ENCODE measurements at regions of chr9 and their contacts with region 1.

Region 1: DNA sequence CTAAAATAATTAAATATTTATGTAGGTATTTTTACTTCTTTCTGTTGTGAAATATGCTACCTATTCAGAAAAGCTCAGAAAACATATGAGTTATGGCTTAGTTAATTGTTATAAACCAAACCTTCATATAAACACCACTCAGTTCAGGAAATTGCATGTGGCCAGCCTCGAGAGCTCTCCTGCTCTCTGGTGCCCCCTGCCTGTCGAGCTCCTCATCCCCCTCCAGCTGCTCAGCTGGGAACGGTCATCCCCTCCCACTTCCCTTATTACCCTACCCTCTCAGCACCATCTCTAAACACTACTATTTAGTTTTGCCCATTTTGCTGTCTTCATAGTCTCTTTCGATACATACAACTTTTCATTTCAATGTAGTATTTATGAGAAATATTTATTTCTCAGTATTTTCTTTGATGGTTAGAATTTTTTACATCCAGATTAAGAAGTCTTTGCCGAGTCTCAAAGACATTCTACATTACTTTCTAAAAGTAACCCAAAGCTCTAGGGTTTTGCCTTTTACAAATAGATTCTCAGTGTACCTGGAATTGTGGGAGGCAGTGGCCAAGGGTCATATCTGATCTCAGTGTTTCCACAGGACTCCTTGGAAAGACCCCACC is 51.2 kb upstream of the SEMA4D start:
- DNase-seq: peak; percentile 89
- ATAC-seq: peak; percentile 100
- H3K4me3 ChIP-seq: no peak overlapping the region
- H3K4me3 Mint-ChIP-seq: no peak overlapping the region
- H3K27ac ChIP-seq: no peak overlapping the region
- H3K27ac Mint-ChIP-seq: peak overlapping the region; percentile 37
- H3K4me1 ChIP-seq: peaks cover 0 to 4% of the 10 kb centered on the region in 2 donors
- H3K4me1 Mint-ChIP-seq: peaks cover 6% of the 10 kb centered on the region
- H3K27me3 ChIP-seq: no peaks in the 10 kb centered on the region
- H3K27me3 Mint-ChIP-seq: no peaks in the 10 kb centered on the region
- CTCF ChIP-seq: peak; percentile 98

Region 2: DNA sequence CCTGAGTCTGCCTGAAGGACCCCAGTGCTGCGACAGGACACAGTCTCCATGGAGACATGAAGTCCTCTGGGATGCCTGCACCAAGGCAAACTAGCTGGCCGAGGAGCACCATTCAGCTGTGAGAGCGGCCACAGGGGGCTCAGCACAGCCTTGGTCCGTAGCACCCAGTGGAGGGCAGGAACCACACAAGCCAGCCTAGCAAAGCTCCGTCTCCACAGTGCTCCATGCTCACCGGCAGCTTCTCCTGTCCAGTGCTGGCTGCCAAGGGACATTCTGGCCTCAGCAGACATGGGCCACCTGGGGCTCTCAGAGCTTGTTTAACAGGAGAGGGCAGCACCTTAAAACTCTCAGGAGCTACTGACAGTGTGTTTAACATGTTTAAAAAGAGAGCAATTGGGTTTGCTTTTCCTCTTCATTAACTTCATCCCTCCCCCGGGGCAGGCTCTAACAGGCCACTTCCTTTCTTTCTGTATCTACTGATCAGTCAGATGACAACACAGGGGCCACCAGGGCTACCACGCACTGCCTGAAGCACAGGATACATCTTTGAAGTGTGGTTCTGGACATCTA is 173.9 kb before region 1 on chr9:
- CTCF ChIA-PET with region 1: interaction called, 83 read pairs
- POLR2A ChIA-PET with region 1: interaction called, 5 read pairs
- intact Hi-C with region 1: loop called (anchors 1 kb)
- DNase-seq: peak; percentile 57
- ATAC-seq: peak; percentile 80
- H3K4me3 ChIP-seq: no peak overlapping the region
- H3K4me3 Mint-ChIP-seq: peak overlapping the region; percentile 27
- H3K27ac ChIP-seq: peak overlapping the region; percentile 48 to 65
- H3K27ac Mint-ChIP-seq: peak overlapping the region; percentile 90
- H3K4me1 ChIP-seq: peaks cover 11 to 22% of the 10 kb centered on the region in 2 donors
- H3K4me1 Mint-ChIP-seq: peaks cover 31% of the 10 kb centered on the region
- H3K27me3 ChIP-seq: no peaks in the 10 kb centered on the region
- H3K27me3 Mint-ChIP-seq: no peaks in the 10 kb centered on the region
- CTCF ChIP-seq: peak; percentile 10

Region 3: DNA sequence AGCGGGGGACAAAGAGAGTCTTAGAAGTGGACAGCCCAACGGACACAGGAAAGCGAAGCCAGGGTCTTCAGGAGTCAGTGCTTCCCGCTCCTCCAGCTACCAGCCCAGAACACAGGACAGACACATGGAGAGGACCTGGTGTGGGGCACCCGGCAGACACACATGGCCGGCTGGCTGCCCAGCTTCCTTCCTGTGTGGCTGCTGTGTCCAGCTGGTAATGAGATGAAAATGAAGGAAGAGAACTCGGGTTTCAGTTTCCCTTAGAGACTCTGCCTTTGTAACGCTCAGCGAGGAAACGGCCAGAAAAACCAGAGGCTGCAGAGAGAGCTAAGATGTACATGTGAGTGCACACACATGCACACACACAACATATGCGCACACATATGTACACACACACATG is 143.3 kb before region 1 on chr9:
- CTCF ChIA-PET with region 1: interaction called, 72 read pairs
- POLR2A ChIA-PET with region 1: interaction called, 3 read pairs
- intact Hi-C with region 1: no loop called
- DNase-seq: peak; percentile 63
- ATAC-seq: peak; percentile 35
- H3K4me3 ChIP-seq: peak overlapping the region; percentile 3 to 47 (median 29)
- H3K4me3 Mint-ChIP-seq: peak overlapping the region; percentile 84
- H3K27ac ChIP-seq: peak overlapping the region; percentile 62 to 79
- H3K27ac Mint-ChIP-seq: peak overlapping the region; percentile 95
- H3K4me1 ChIP-seq: peaks cover 77 to 86% of the 10 kb centered on the region in 2 donors
- H3K4me1 Mint-ChIP-seq: peaks cover 89% of the 10 kb centered on the region
- H3K27me3 ChIP-seq: no peaks in the 10 kb centered on the region
- H3K27me3 Mint-ChIP-seq: no peaks in the 10 kb centered on the region
- CTCF ChIP-seq: no peak

Region 4: DNA sequence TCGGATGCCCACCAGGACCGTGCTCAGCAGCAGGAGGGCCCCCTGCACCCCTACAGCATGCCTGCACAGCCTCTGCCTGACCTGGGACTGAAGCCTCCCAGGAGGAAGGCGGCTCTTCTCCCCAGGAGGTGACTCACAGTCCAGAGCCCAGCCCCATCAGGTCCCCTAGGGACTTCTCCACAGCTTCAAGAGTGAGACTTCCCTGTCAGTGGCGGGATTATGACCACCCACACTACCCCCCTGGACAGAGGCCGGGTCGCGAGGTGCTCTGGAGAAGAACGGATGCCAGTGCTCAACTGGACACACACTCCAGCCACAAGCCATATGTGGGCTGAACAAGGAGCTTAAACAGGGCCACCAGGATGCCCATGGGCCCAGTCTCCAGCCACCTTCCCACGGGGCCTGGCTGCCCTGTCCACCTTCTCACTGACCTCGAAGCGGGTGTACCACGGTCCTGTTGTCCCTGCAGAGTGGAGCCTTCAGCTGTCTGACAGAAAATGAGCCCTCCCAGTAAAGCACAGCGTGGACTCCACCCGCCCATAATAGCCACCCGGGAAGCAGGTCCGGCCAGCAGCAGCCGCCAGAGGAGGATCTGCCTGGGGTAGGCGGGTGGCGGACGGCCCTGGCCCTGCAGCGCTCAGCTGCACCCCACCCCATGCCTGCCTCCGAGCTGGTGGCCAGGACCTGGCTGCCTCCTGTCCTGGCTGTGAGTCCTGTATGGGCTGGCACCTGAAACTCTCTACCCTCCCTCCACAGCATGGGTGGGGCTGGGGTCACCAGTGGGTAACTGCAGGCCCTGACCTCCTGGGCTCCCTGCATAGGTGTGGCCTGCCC is 105.9 kb before region 1 on chr9:
- CTCF ChIA-PET with region 1: interaction called, 20 read pairs
- POLR2A ChIA-PET with region 1: interaction called, 3 read pairs
- intact Hi-C with region 1: no loop called
- DNase-seq: no peak
- ATAC-seq: peak; percentile 77
- H3K4me3 ChIP-seq: peak overlapping the region in 1 of 5 experiments; percentile 37
- H3K4me3 Mint-ChIP-seq: peak overlapping the region; percentile 68
- H3K27ac ChIP-seq: peak overlapping the region in 1 of 2 donors; percentile 38
- H3K27ac Mint-ChIP-seq: peak overlapping the region; percentile 68
- H3K4me1 ChIP-seq: peaks cover 46 to 68% of the 10 kb centered on the region in 2 donors
- H3K4me1 Mint-ChIP-seq: peaks cover 82% of the 10 kb centered on the region
- H3K27me3 ChIP-seq: no peaks in the 10 kb centered on the region
- H3K27me3 Mint-ChIP-seq: no peaks in the 10 kb centered on the region
- CTCF ChIP-seq: no peak

Region 5: DNA sequence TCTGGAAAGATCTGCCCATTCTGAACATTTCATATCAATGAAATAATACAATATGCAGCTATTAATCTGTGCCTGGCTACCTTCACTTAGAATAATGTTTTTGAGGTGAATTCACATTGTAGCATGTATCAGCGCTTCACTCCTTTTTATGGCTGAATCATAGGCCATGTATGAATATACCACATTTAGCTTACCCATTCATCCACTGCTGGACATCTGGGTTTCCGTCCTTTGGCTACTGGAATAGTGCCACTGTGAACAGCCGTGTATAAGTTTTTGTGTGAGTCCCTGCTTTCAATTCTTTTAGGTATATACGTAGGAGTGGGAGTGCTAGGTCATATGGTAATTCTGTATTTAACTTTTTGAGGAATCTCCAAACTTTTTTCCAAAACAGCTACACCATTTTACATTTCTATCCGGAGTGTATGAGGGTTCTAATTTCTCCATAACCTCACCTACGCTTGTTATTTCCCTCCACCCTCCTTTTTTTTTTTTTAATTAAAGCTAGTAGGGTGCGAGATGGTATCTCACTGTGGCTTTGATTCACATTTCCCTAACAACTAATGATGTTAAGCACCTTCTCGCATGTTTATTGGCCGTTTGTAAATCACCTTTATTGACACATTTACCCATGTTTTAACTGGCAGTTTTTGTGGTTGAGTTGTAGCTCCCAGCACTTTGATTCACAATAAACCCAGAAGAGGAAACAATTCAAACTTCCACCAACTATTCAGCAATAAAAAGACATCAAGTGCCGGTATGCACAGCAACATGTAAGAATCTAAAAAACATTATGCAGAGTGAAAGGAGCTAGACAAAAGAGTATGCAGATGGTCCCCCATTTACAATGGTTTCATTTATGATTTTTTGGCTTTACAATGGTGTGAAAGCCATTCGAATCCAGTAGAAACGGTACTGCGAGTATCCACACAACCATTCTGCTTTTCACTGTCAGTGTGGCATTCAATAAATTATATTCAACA is 59.3 kb before region 1 on chr9:
- CTCF ChIA-PET with region 1: interaction called, 45 read pairs
- POLR2A ChIA-PET with region 1: interaction called, 6 read pairs
- intact Hi-C with region 1: loop called (anchors 1 kb)
- DNase-seq: peak; percentile 73
- ATAC-seq: peak; percentile 56
- H3K4me3 ChIP-seq: no peak overlapping the region
- H3K4me3 Mint-ChIP-seq: peak overlapping the region; percentile 60
- H3K27ac ChIP-seq: peak overlapping the region; percentile 48 to 69
- H3K27ac Mint-ChIP-seq: peak overlapping the region; percentile 68
- H3K4me1 ChIP-seq: peaks cover 55 to 59% of the 10 kb centered on the region in 2 donors
- H3K4me1 Mint-ChIP-seq: peaks cover 86% of the 10 kb centered on the region
- H3K27me3 ChIP-seq: no peaks in the 10 kb centered on the region
- H3K27me3 Mint-ChIP-seq: no peaks in the 10 kb centered on the region
- CTCF ChIP-seq: no peak

Region 6: DNA sequence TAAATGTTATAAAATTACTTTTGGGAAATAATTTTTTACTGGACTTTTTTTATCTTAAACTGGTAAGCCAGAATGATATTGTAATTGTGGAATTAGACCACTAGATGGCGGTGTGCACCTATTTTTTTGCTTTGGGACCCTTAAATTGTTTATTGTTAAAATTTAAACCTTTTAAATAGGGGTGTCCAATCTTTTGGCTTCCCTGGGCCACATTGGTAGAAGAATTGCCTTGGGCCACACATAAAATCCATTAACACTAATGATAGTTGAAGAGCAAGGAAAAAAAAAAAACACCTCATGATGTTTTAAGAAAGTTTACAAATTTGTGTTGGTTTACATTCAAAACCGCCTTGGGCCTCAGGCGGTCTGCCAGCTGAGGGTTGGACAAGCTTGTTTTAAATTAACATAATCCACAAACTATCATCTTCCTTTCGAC is 27.3 kb after region 1 on chr9:
- CTCF ChIA-PET with region 1: interaction called, 22 read pairs
- POLR2A ChIA-PET with region 1: no interaction called
- intact Hi-C with region 1: no loop called
- DNase-seq: peak; percentile 53
- ATAC-seq: no peak
- H3K4me3 ChIP-seq: no peak overlapping the region
- H3K4me3 Mint-ChIP-seq: no peak overlapping the region
- H3K27ac ChIP-seq: no peak overlapping the region
- H3K27ac Mint-ChIP-seq: no peak overlapping the region
- H3K4me1 ChIP-seq: no peaks in the 10 kb centered on the region
- H3K4me1 Mint-ChIP-seq: peaks cover 2% of the 10 kb centered on the region
- H3K27me3 ChIP-seq: peaks cover 0 to 14% (median 11%) of the 10 kb centered on the region in 4 experiments
- H3K27me3 Mint-ChIP-seq: peaks cover 37% of the 10 kb centered on the region
- CTCF ChIP-seq: peak; percentile 96

Measured in B cell (primary cell).